HCT116 (cell line): ENCODE measurements at regions of chr1 and their contacts with region 1.

Region 1: GRCh38 chr1:68197891-68198290 is 34.4 kb downstream of the WLS start:
- DNase-seq: peak; percentile 38
- ATAC-seq: peak; percentile 83
- H3K4me3 ChIP-seq: peak overlapping the region in 1 of 2 experiments; percentile 31; a peak in 1 of 4 replicates
- H3K27ac ChIP-seq: peak overlapping the region; percentile 43; the same call in 1 of the 2 replicates
- H3K4me1 ChIP-seq: peaks cover 28 to 36% of the 10 kb centered on the region in 2 experiments
- H3K27me3 ChIP-seq: no peaks in the 10 kb centered on the region
- CTCF ChIP-seq: no peak
- POLR2A ChIP-seq: no peak
- RAD21 ChIP-seq: no peak

Region 2: DNA sequence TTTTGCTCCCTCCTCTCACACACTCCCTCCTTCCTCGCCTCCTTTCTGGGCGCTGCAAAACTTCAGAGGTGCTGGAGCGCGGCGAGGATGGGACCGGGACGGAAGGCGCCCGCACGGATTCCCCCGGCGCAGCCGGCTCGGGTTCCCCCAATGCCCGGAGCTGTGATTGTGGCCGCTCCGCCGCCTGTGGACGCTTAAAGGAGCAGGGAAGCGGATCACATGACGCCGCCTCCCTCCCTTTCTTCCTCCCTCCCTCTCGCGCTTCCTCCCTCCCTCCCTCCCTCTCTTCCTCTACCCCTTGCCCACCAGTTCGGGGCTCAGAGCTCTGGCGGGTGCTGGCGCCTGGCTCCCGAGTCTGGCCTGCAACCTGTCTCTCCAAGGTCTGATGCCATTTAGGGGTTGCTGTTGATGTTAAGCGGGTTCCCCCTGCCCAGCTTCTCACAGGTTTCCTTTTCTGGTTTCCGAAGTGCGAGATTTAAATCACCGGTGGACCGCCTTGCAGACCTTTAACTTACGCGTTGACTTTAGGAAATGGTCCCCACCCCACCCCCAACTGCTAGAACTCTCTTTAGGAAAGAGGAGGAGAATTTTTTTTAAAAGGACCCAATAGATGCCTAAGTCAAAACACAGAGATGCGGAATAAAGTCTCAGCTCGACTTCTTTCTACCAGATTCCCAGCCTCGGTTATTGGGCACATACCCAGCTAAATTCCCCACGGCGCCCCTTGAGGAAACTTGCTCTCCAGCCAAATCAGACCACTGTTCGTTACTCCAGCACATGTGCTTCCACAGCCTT is 34.7 kb after region 1 on chr1 and contains the start of gene WLS:
- CTCF ChIA-PET with region 1: interaction called, 4 read pairs
- POLR2A ChIA-PET with region 1: interaction called, 3 read pairs
- RAD21 ChIA-PET with region 1: no interaction called
- intact Hi-C with region 1: loop called (anchors 2 kb)
- DNase-seq: peak; percentile 38
- ATAC-seq: peak; percentile 89
- H3K4me3 ChIP-seq: peak within 1 kb of the TSS; percentile 78 to 85
- H3K27ac ChIP-seq: peak within 1 kb of the TSS; percentile 37
- H3K4me1 ChIP-seq: peaks cover 7 to 11% of the 10 kb centered on the region in 2 experiments; a peak in 3 of 4 replicates
- H3K27me3 ChIP-seq: no peaks in the 10 kb centered on the region
- CTCF ChIP-seq: peak in 1 of 3 experiments; percentile 6; a peak in 1 of 6 replicates
- POLR2A ChIP-seq: peak; percentile 81
- RAD21 ChIP-seq: no peak
- total RNA-seq, gene WLS: 38.0 TPM

Region 3: DNA sequence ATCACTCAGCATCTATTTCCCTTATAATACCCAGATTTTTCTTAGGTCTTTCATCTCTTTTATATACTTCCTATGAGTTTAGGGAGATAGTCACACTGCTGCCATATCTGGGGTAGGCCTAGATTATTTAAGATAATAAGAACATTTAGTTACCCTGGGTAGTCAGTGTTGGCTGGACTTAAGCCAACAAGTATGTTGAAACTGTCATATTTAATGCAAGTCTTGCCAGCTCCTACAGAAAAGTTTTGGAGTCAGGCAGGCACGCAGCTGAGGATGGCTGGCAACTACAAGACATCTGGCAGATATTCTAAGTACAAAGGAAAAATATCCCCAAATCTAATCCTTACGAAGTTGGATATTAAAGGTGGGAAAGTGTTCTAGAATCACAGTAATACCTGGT is 318.2 kb after region 1 on chr1:
- CTCF ChIA-PET with region 1: no interaction called
- POLR2A ChIA-PET with region 1: no interaction called
- RAD21 ChIA-PET with region 1: no interaction called
- intact Hi-C with region 1: no loop called
- DNase-seq: no peak
- ATAC-seq: no peak
- H3K4me3 ChIP-seq: no peak overlapping the region
- H3K27ac ChIP-seq: no peak overlapping the region
- H3K4me1 ChIP-seq: no peaks in the 10 kb centered on the region
- H3K27me3 ChIP-seq: no peaks in the 10 kb centered on the region
- CTCF ChIP-seq: no peak
- POLR2A ChIP-seq: no peak
- RAD21 ChIP-seq: no peak

Region 4: GRCh38 chr1:68651115-68651514 is 453.2 kb after region 1 on chr1:
- CTCF ChIA-PET with region 1: no interaction called
- POLR2A ChIA-PET with region 1: no interaction called
- RAD21 ChIA-PET with region 1: no interaction called
- intact Hi-C with region 1: no loop called
- DNase-seq: no peak
- ATAC-seq: no peak
- H3K4me3 ChIP-seq: no peak overlapping the region
- H3K27ac ChIP-seq: no peak overlapping the region
- H3K4me1 ChIP-seq: no peaks in the 10 kb centered on the region
- H3K27me3 ChIP-seq: no peaks in the 10 kb centered on the region
- CTCF ChIP-seq: no peak
- POLR2A ChIP-seq: no peak
- RAD21 ChIP-seq: no peak